PC-9 (cell line): ENCODE measurements at regions of chr3 and their contacts with region 1.

Region 1: DNA sequence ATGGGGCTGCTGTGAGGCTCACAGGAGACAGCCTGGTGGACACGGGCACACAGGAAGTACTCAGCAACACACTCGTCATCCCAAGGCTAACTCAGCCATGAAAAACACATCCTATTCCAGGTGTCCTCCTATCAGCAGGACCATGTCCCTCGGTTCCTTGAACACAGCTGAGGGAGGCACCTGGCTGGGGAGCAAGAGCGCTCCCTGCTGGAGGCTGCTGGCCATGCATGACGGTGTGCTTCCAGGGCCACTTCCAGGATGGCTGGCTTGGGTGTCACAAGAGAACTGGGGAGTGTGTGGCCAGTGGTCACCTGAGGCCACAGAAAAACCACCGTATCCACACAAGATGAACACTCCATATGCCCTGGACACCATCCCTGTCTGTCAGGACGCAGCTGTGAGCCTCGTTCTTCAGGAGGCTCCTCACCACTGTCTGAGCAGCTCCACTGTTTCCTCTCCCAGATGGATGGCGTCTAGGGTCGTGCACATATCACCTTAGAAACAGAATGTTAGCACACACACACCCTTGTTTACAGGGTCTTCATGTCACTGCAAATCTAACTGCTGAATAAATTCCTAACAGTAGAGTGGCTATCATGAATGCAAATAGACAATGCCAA is 31.0 kb downstream of the POC1A start:
- DNase-seq: peak in 1 of 2 experiments; percentile 71
- H3K4me3 ChIP-seq: no peak overlapping the region
- H3K27ac ChIP-seq: no peak overlapping the region
- H3K4me1 ChIP-seq: peaks cover 7% of the 10 kb centered on the region
- H3K27me3 ChIP-seq: no peaks in the 10 kb centered on the region
- CTCF ChIP-seq: peak; percentile 81

Region 2: GRCh38 chr3:52001443-52001974 is 121.7 kb before region 1 on chr3:
- CTCF ChIA-PET with region 1: interaction called, 5 read pairs
- POLR2A ChIA-PET with region 1: no interaction called
- intact Hi-C with region 1: loop called (anchors 1 kb)
- DNase-seq: peak in 1 of 2 experiments; percentile 73
- H3K4me3 ChIP-seq: no peak overlapping the region
- H3K27ac ChIP-seq: no peak overlapping the region
- H3K4me1 ChIP-seq: peaks cover 13% of the 10 kb centered on the region
- H3K27me3 ChIP-seq: no peaks in the 10 kb centered on the region
- CTCF ChIP-seq: peak; percentile 92

Region 3: DNA sequence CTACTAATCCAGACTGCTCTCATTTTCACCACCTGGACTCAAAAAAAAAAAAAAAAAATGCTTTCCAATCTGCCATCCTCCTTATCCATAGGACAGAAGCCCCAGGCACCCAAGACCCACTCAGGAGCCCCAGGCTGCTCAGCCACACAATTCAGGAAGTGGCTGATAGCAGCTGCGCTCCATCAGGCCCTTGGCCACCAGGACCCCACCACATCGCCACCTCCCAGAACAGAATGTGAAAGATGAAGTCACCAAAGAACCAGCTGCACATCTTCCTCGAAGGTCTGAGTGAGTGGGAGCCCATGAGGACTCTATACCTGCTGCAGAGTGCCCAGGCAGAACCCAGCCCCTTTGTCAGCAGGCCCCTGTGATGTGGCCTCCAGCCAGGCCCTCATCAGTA is 11.5 kb after region 1 on chr3:
- CTCF ChIA-PET with region 1: no interaction called
- POLR2A ChIA-PET with region 1: no interaction called
- intact Hi-C with region 1: no loop called
- DNase-seq: no peak
- H3K4me3 ChIP-seq: no peak overlapping the region
- H3K27ac ChIP-seq: no peak overlapping the region
- H3K4me1 ChIP-seq: no peaks in the 10 kb centered on the region
- H3K27me3 ChIP-seq: no peaks in the 10 kb centered on the region
- CTCF ChIP-seq: no peak

Region 4: DNA sequence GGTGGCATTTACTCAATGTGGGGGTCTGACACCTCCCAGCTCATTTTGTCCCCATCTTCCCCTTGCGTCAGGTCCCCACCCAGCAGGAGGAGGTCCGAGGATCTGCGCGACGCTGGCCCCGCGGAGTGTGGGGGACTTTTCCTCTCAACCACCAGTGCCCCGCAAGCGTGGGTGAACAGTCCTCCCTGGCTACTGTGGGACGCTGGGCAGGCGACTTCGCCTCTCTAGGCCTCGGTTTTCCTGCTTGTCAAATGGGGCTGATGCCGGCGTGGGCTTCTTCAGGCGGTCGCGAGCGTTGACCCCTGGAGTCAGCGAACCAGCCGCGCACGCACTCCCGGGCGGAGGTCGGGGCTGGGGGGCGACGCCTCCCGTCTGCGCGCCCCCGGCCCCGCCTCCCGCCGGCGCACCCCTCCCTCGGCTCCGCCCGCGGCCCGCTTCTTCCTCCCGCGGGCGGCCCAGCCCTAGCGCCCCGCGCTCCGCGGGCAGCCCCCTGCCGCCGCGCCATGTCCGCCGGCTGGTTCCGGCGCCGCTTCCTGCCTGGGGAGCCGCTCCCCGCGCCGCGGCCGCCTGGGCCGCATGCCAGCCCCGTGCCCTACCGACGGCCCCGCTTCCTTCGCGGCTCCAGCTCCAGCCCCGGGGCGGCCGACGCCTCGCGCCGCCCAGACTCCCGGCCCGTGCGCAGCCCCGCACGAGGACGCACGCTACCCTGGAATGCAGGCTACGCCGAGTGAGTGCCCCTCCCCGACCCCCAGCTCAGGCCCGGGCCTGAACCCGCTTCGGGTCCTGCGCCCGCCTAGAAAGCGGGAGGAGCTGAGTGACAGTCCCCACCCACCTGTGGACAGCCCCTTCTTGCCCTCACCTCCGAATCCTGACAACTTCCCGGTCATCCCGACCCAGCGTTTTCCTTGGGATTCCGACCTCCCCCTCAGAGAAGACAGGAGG is 122.4 kb after region 1 on chr3 and contains the start of gene PPM1M:
- CTCF ChIA-PET with region 1: no interaction called
- POLR2A ChIA-PET with region 1: no interaction called
- intact Hi-C with region 1: no loop called
- DNase-seq: peak in 1 of 2 experiments; percentile 60
- H3K4me3 ChIP-seq: peak within 1 kb of the TSS; percentile 58
- H3K27ac ChIP-seq: peak within 1 kb of the TSS; percentile 63
- H3K4me1 ChIP-seq: peaks cover 32% of the 10 kb centered on the region
- H3K27me3 ChIP-seq: no peaks in the 10 kb centered on the region
- CTCF ChIP-seq: no peak
- total RNA-seq, gene PPM1M: 16.2 TPM in 2 replicates